Activated CD4-positive, alpha-beta T cell treated with anti-CD3 and anti-CD28 coated beads, Interleukin-2, amount 10 ng/mL, durations not matched to agents 24 days and 14 days (primary cell): ENCODE measurements at regions of chr15 and their contacts with region 1.

Region 1: GRCh38 chr15:43977072-43977884 is 150.5 kb downstream of the WDR76 start:
- DNase-seq: peak; percentile 89
- H3K4me3 Mint-ChIP-seq: peak overlapping the region; percentile 11
- H3K27ac Mint-ChIP-seq: peak overlapping the region; percentile 80
- H3K4me1 Mint-ChIP-seq: peaks cover 24% of the 10 kb centered on the region
- H3K27me3 Mint-ChIP-seq: peaks cover 12% of the 10 kb centered on the region

Region 2: GRCh38 chr15:43390723-43391122 is 586.6 kb before region 1 on chr15:
- intact Hi-C with region 1: no loop called
- DNase-seq: no peak
- H3K4me3 Mint-ChIP-seq: no peak overlapping the region
- H3K27ac Mint-ChIP-seq: no peak overlapping the region
- H3K4me1 Mint-ChIP-seq: no peaks in the 10 kb centered on the region
- H3K27me3 Mint-ChIP-seq: no peaks in the 10 kb centered on the region

Region 3: GRCh38 chr15:43954181-43954621 is 23.1 kb before region 1 on chr15:
- intact Hi-C with region 1: loop called (anchors 1 kb)
- DNase-seq: no peak
- H3K4me3 Mint-ChIP-seq: no peak overlapping the region
- H3K27ac Mint-ChIP-seq: peak overlapping the region; percentile 87
- H3K4me1 Mint-ChIP-seq: peaks cover 19% of the 10 kb centered on the region
- H3K27me3 Mint-ChIP-seq: peaks cover 6% of the 10 kb centered on the region

Region 4: GRCh38 chr15:43998607-43999006 is 21.3 kb after region 1 on chr15:
- intact Hi-C with region 1: loop called (anchors 1 kb)
- DNase-seq: no peak
- H3K4me3 Mint-ChIP-seq: no peak overlapping the region
- H3K27ac Mint-ChIP-seq: no peak overlapping the region
- H3K4me1 Mint-ChIP-seq: no peaks in the 10 kb centered on the region
- H3K27me3 Mint-ChIP-seq: peaks cover 15% of the 10 kb centered on the region

Region 5: DNA sequence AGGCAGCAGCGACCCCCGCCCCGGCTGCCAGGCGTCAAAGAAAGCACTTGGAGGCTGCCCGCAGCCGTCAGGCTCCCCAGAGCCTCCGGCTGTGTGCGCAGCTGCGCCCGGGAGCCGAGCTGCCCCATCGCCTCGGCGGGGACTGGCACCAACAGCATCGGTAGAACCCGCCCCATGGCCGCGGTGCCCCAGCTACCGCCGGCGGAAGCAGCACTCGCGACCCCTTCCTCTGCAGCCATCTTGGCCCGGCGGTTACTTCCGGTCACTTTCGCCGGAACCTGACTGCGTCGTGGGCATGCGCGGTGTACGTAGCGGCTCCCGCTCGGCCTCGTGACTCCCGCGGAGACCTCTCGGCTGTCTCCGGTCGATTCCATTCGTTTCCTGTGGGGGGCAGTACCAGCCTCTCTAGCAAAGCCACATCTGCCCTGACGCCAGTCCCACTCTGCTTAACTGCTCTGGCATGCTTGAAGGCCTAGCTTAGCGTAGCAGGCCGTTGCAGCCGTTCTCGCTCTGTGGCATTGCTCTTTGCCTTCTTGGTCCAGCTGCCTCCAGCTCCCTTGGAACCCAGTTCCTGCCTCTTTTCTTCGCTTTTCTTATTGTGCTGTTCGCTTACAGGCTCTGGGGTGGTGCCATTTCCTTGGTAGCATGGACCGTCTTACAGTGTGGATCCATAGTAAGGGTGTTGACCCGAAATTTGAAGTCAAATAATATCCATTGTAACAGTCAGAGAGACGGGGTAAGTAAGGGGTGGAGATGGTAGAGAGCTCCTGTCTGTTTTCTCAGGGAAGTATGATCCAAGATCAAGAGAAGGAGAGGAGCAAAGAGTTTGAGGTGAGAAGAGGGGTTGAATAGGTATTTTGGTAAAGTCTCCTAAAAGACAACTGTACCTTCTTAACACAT is 686.4 kb after region 1 on chr15 and contains the start of gene SPG11:
- intact Hi-C with region 1: no loop called
- DNase-seq: peak; percentile 99
- H3K4me3 Mint-ChIP-seq: peak within 1 kb of the TSS; percentile 86
- H3K27ac Mint-ChIP-seq: peak within 1 kb of the TSS; percentile 98
- H3K4me1 Mint-ChIP-seq: peaks cover 57% of the 10 kb centered on the region
- H3K27me3 Mint-ChIP-seq: no peaks in the 10 kb centered on the region
- total RNA-seq, gene SPG11: 67.2 and 68.0 TPM in 2 replicates